CD4-positive, alpha-beta memory T cell (primary cell): ENCODE measurements at regions of chr6 and their contacts with region 1.

Region 1: DNA sequence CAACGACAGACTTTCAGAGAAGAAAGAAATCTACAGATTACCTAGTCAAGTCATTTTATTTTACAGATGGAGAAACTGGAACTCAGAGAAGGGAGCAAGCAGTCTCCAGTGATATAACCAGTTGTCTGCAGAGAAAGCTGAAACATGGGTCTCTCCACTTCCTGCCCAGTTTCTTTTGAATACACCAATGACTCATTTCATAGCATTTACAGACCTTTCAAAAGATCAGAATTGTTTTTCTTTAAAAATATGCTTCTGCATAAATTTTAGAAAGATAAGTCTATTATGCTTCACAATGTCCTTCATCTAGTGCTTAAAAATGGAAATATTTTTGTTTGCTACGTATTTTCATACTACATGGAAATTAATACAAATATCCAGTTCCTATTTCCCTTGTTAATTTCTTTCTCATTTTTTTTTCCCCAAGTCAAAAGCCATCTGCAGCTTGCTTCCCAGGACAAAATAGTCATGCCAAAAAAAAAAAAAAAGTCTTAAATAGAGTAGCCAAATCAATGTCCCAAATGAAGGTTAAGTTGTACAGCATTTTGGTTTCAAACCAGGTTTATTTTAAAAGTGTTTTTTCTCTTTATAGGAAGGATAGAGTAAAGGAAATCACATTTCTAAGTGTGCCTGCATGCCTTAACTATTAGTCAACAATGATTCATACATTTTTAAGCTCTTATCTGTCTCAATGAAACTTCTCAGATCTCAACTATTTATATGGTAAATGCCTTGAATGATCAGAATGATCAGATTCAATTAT is 36.9 kb downstream of the ARHGAP18 start:
- DNase-seq: peak; percentile 18 to 48 (median 19)
- H3K4me3 ChIP-seq: peak overlapping the region in 1 of 2 donors; percentile 53
- H3K4me3 Mint-ChIP-seq: peak overlapping the region; percentile 80 to 87 (median 82)
- H3K27ac ChIP-seq: peak overlapping the region; percentile 56
- H3K27ac Mint-ChIP-seq: peak overlapping the region; percentile 74 to 94 (median 92)
- H3K4me1 ChIP-seq: peaks cover 32% of the 10 kb centered on the region
- H3K4me1 Mint-ChIP-seq: peaks cover 29 to 31% (median 29%) of the 10 kb centered on the region in 4 donors
- H3K27me3 ChIP-seq: no peaks in the 10 kb centered on the region
- H3K27me3 Mint-ChIP-seq: no peaks in the 10 kb centered on the region

Region 2: GRCh38 chr6:129490521-129491245 is 182.4 kb before region 1 on chr6:
- CTCF ChIA-PET with region 1: no interaction called
- POLR2A ChIA-PET with region 1: no interaction called
- intact Hi-C with region 1: loop called (anchors 2 kb)
- DNase-seq: peak; percentile 75 to 90 (median 80)
- H3K4me3 ChIP-seq: peak overlapping the region; percentile 19 to 39
- H3K4me3 Mint-ChIP-seq: peak overlapping the region; percentile 76 to 92 (median 85)
- H3K27ac ChIP-seq: peak overlapping the region; percentile 84
- H3K27ac Mint-ChIP-seq: peak overlapping the region; percentile 87 to 98 (median 96)
- H3K4me1 ChIP-seq: peaks cover 25% of the 10 kb centered on the region
- H3K4me1 Mint-ChIP-seq: peaks cover 20 to 33% (median 27%) of the 10 kb centered on the region in 4 donors
- H3K27me3 ChIP-seq: no peaks in the 10 kb centered on the region
- H3K27me3 Mint-ChIP-seq: no peaks in the 10 kb centered on the region

Region 3: GRCh38 chr6:129683601-129684322 is 10.7 kb after region 1 on chr6:
- CTCF ChIA-PET with region 1: interaction called, 35 read pairs
- POLR2A ChIA-PET with region 1: interaction called, 35 read pairs
- intact Hi-C with region 1: loop called (anchors 1 kb)
- DNase-seq: peak; percentile 55 to 86 (median 64)
- H3K4me3 ChIP-seq: no peak overlapping the region
- H3K4me3 Mint-ChIP-seq: peak overlapping the region in 7 of 8 donors; percentile 30 to 75 (median 52)
- H3K27ac ChIP-seq: peak overlapping the region; percentile 43
- H3K27ac Mint-ChIP-seq: peak overlapping the region; percentile 70 to 91 (median 90)
- H3K4me1 ChIP-seq: peaks cover 65% of the 10 kb centered on the region
- H3K4me1 Mint-ChIP-seq: peaks cover 37 to 51% (median 44%) of the 10 kb centered on the region in 4 donors
- H3K27me3 ChIP-seq: no peaks in the 10 kb centered on the region
- H3K27me3 Mint-ChIP-seq: no peaks in the 10 kb centered on the region

Region 4: DNA sequence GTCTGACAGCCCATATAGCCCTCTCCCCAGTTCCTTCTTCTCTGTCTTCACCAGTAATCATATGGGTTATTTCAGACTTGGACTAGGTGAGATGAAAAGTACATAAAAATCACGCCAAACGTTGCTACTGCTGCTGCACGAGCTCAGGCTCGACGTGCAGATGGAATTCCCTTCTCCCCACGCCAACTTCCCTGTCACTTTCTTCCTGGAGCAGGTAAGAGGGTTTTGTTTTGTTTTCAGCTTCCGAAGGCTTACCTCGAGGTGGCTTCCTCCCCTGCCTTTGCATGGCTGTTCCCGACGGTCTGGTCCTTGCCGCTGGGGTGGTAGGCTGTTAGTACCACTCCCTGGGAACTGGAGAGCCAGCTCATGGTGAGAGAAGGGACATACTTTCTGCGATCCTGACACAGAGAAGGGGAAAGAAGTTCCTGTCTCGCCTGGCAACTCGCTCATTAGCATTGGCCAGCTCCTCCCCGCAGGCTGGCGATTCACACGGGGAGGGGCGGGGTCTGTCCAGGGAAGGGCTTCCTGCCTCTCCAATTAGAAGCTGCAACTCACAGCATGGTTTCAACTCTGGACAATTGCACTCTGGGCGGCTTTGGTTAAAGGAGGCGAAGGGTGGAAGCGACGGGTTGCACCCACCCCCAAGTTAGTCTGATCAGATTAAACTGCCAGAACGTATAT is 36.8 kb after region 1 on chr6 and contains the start of gene ARHGAP18:
- CTCF ChIA-PET with region 1: interaction called, 21 read pairs
- POLR2A ChIA-PET with region 1: interaction called, 14 read pairs
- intact Hi-C with region 1: loop called (anchors 5 kb)
- DNase-seq: peak; percentile 58 to 76 (median 68)
- H3K4me3 ChIP-seq: peak within 1 kb of the TSS; percentile 81 to 97
- H3K4me3 Mint-ChIP-seq: peak within 1 kb of the TSS; percentile 95 to 99 (median 98)
- H3K27ac ChIP-seq: peak within 1 kb of the TSS; percentile 65
- H3K27ac Mint-ChIP-seq: peak within 1 kb of the TSS; percentile 57 to 96 (median 94)
- H3K4me1 ChIP-seq: peaks cover 38% of the 10 kb centered on the region
- H3K4me1 Mint-ChIP-seq: peaks cover 29 to 45% (median 38%) of the 10 kb centered on the region in 4 donors
- H3K27me3 ChIP-seq: no peaks in the 10 kb centered on the region
- H3K27me3 Mint-ChIP-seq: peaks cover 0 to 2% of the 10 kb centered on the region in 2 donors
- total RNA-seq, gene ARHGAP18: 4.3 to 4.6 TPM